ENCODE measurements at regions of chr18 and their contacts with region 1.

Region 1: GRCh38 chr18:28176933-28177827 is at the start of gene CDH2:
- DNase-seq: peak; percentile 85
- ATAC-seq: peak; percentile 73
- H3K4me3 ChIP-seq: peak within 1 kb of the TSS; percentile 99
- H3K27ac ChIP-seq: peak within 1 kb of the TSS; percentile 18; the same call in 1 of the 2 replicates
- H3K4me1 ChIP-seq: peaks cover 3% of the 10 kb centered on the region; the same call in 1 of the 2 replicates
- H3K27me3 ChIP-seq: no peaks in the 10 kb centered on the region
- CTCF ChIP-seq: peak; percentile 17; the same call in 1 of the 2 replicates
- POLR2A ChIP-seq: peak; percentile 53; the same call in 1 of the 2 replicates
- RAD21 ChIP-seq: no peak
- total RNA-seq, gene CDH2: 105 and 111 TPM in 2 replicates

Region 2: GRCh38 chr18:27954226-27954625 is 223.0 kb before region 1 on chr18:
- CTCF ChIA-PET with region 1: no interaction called
- POLR2A ChIA-PET with region 1: no interaction called
- dilution Hi-C with region 1: no loop called
- in situ Hi-C with region 1: no loop called
- intact Hi-C with region 1: loop called (anchors 10 kb)
- DNase-seq: peak; percentile 89
- ATAC-seq: peak; percentile 95
- H3K4me3 ChIP-seq: no peak overlapping the region
- H3K27ac ChIP-seq: no peak overlapping the region
- H3K4me1 ChIP-seq: peaks cover 3% of the 10 kb centered on the region
- H3K27me3 ChIP-seq: no peaks in the 10 kb centered on the region
- CTCF ChIP-seq: no peak
- POLR2A ChIP-seq: no peak
- RAD21 ChIP-seq: 0 out of 2 replicates have a peak, but pooled peaks have one; percentile 9

Region 3: GRCh38 chr18:28108814-28109213 is 68.4 kb before region 1 on chr18:
- CTCF ChIA-PET with region 1: no interaction called
- POLR2A ChIA-PET with region 1: no interaction called
- dilution Hi-C with region 1: no loop called
- in situ Hi-C with region 1: no loop called
- intact Hi-C with region 1: loop called (anchors 5 kb)
- DNase-seq: no peak
- ATAC-seq: no peak
- H3K4me3 ChIP-seq: no peak overlapping the region
- H3K27ac ChIP-seq: no peak overlapping the region
- H3K4me1 ChIP-seq: peaks cover 17% of the 10 kb centered on the region
- H3K27me3 ChIP-seq: no peaks in the 10 kb centered on the region
- CTCF ChIP-seq: no peak
- POLR2A ChIP-seq: no peak
- RAD21 ChIP-seq: peak; percentile 37

Region 4: DNA sequence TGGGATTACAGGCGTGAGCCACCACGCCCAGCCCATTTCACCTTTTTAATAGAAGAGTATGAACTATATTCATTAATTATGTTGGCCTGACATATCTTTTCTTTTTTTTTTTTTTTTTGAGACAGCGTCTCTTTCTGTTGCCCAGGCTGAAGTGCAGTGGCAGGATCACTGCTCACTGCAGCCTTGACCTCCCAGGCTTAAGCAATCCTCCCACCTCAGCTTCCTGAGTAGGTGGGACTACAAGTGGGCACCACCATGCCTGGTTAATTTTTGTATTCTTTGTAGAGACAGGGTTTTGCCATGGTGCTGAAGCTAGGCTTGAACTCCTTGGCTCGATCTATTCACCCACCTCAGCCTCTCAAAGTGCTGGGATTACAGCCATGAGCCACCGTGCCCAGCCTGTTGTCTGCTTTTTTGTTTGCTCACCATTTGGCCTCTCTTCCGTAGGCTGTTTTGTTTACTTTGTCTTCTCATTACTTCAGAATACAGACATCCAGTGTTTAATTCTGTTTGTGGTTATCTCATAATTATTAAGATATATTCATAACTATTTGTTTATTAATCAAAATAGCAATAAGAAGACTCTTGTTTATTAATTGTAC is 16.1 kb after region 1 on chr18:
- CTCF ChIA-PET with region 1: no interaction called
- POLR2A ChIA-PET with region 1: no interaction called
- dilution Hi-C with region 1: no loop called
- in situ Hi-C with region 1: no loop called
- intact Hi-C with region 1: no loop called
- DNase-seq: no peak
- ATAC-seq: no peak
- H3K4me3 ChIP-seq: no peak overlapping the region
- H3K27ac ChIP-seq: no peak overlapping the region
- H3K4me1 ChIP-seq: no peaks in the 10 kb centered on the region
- H3K27me3 ChIP-seq: no peaks in the 10 kb centered on the region
- CTCF ChIP-seq: no peak
- POLR2A ChIP-seq: no peak
- RAD21 ChIP-seq: no peak

Region 5: GRCh38 chr18:28588884-28589549 is 411.8 kb after region 1 on chr18:
- CTCF ChIA-PET with region 1: no interaction called
- POLR2A ChIA-PET with region 1: no interaction called
- dilution Hi-C with region 1: no loop called
- in situ Hi-C with region 1: no loop called
- intact Hi-C with region 1: no loop called
- DNase-seq: peak; percentile 18
- ATAC-seq: peak; percentile 36; the same call in 1 of the 2 replicates
- H3K4me3 ChIP-seq: no peak overlapping the region
- H3K27ac ChIP-seq: no peak overlapping the region
- H3K4me1 ChIP-seq: peaks cover 1% of the 10 kb centered on the region; the same call in 1 of the 2 replicates
- H3K27me3 ChIP-seq: no peaks in the 10 kb centered on the region
- CTCF ChIP-seq: no peak
- POLR2A ChIP-seq: no peak
- RAD21 ChIP-seq: no peak

Region 6: DNA sequence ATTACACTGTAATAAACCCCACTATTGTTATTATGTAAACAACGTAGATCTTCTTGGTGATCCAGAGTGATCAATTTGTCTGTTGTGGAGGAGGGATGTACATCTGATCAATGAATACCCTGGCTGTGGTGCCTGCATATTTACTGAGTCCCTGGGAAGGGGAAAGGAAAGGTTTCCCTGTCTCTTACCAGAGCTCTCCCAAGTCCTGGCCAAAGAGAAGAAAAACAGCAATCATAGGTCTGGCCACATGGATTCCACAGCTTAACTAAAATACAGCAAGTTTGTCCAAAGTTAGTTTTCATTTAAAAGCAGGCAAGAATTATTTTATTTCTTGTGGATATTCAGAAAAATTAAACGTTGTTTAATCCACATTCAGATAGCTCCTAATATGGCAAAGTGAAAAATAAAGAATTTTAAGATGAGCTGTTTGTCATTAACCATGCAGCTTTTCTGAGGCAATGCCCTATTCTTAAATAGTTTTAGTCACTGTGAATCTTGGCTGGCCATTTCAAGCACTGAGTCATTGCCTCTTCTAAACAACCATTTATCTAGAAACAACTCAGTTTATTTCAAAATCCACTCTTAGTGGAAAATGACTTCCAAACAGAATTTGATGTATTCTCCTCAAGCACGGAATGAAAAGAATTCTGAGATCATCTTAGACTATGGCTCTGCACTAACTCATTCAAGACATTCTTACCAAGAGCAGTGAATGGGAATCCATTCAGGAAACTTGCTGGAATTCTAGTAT is 1004.1 kb after region 1 on chr18:
- CTCF ChIA-PET with region 1: no interaction called
- POLR2A ChIA-PET with region 1: no interaction called
- dilution Hi-C with region 1: no loop called
- in situ Hi-C with region 1: no loop called
- intact Hi-C with region 1: loop called (anchors 10 kb)
- DNase-seq: peak; percentile 98
- ATAC-seq: peak; percentile 92
- H3K4me3 ChIP-seq: no peak overlapping the region
- H3K27ac ChIP-seq: peak overlapping the region; percentile 95
- H3K4me1 ChIP-seq: peaks cover 7% of the 10 kb centered on the region
- H3K27me3 ChIP-seq: no peaks in the 10 kb centered on the region
- CTCF ChIP-seq: no peak
- POLR2A ChIP-seq: no peak
- RAD21 ChIP-seq: no peak